Dorsolateral prefrontal cortex (tissue), 120 donors: ENCODE measurements at regions of chr6 and their contacts with region 1.

Region 1: GRCh38 chr6:35731736-35732532 is 4.9 kb upstream of the ARMC12 start:
- DNase-seq: peak; percentile 83 to 92 (median 88)
- H3K4me3 ChIP-seq: peak overlapping the region; percentile 56 to 97 (median 75)
- H3K27ac ChIP-seq: peak overlapping the region; percentile 97 to 100 (median 100)
- H3K27me3 ChIP-seq: no peaks in the 10 kb centered on the region
- CTCF ChIP-seq: peak in 32 of 56 donors; percentile 2 to 53 (median 22)

Region 2: DNA sequence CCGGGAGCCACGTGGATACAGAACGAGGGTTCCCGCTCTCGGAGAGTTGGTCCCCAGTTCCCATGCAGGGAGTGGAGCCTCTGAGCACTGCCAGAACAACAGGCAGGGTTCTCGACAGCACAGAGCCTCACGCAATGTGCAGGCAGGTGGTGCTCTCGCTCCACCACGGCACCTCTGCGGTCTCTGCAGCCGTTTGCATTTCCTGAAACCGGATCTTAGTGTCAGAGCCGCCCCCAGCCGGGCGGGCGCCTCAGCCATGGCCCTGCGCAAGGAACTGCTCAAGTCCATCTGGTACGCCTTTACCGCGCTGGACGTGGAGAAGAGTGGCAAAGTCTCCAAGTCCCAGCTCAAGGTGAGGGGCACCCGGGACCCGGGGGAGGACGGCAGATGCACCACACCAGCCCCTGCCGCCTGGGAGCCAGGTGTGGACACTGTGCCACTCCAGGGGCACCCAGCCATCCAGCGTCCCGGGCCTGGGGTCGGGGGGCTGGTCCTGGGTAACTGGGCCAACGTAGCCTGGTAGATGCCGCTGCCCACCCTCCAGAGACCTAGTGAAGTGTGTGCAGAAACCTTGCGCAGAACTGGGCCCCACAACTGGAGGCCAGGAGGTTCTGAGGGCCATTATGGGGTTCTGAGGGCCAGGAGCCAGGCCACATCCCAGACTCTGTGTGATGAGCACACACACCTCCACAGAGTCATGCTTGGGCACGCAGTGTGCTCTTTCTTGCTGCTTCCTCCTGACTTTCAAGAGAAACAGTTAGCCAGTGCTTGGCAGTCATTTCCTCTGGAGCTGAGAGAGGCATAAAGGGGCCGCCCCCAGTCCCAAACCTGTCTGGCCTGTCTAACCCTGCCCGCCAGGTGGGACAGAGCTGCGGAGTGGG is 434.1 kb before region 1 on chr6 and contains the start of gene DEF6:
- intact Hi-C with region 1: loop called in 1 of 2 experiments (anchors 10 kb)
- DNase-seq: peak in 7 of 10 donors; percentile 22 to 60 (median 51)
- H3K4me3 ChIP-seq: peak within 1 kb of the TSS in 51 of 59 donors; percentile 5 to 59 (median 37)
- H3K27ac ChIP-seq: peak within 1 kb of the TSS in 43 of 59 donors; percentile 4 to 78 (median 47)
- H3K27me3 ChIP-seq: no peaks in the 10 kb centered on the region
- CTCF ChIP-seq: peak in 51 of 56 donors; percentile 27 to 72 (median 49)
- total RNA-seq, gene DEF6: 1.6 to 10.2 (median 4.8) TPM

Region 3: DNA sequence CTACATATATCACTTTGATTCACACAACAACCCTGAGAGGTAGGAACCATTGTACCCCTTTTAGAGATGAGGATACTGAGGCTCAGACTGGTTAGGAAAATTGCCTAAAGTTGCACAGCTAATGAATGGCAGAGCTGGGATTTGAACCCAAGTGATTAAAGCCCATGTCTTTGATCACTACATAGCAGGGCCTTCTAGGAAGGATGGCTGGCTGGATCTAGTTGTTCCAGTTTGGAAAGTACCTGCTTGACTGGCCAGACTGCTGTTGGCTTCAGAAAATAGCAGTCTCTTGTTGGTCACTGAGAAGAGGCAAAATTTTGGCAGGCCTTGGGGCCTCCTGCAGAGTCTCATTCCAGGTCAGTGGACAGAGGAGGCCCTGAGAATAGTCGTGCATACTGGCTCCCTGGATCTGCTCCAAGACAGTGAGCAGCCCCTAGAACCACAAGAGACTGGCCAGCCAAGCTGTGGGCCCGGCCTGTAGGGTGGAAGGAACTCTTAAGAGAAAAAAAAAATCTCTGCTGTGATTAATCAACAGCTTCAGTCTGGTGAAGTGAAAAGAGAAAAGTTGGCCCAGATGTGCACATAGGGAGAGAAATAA is 372.1 kb before region 1 on chr6:
- intact Hi-C with region 1: loop called in 1 of 2 experiments (anchors 10 kb)
- DNase-seq: peak in 7 of 10 donors; percentile 24 to 74 (median 55)
- H3K4me3 ChIP-seq: peak overlapping the region in 1 of 59 donors; percentile 25
- H3K27ac ChIP-seq: peak overlapping the region; percentile 8 to 92 (median 77)
- H3K27me3 ChIP-seq: no peaks in the 10 kb centered on the region
- CTCF ChIP-seq: no peak

Region 4: DNA sequence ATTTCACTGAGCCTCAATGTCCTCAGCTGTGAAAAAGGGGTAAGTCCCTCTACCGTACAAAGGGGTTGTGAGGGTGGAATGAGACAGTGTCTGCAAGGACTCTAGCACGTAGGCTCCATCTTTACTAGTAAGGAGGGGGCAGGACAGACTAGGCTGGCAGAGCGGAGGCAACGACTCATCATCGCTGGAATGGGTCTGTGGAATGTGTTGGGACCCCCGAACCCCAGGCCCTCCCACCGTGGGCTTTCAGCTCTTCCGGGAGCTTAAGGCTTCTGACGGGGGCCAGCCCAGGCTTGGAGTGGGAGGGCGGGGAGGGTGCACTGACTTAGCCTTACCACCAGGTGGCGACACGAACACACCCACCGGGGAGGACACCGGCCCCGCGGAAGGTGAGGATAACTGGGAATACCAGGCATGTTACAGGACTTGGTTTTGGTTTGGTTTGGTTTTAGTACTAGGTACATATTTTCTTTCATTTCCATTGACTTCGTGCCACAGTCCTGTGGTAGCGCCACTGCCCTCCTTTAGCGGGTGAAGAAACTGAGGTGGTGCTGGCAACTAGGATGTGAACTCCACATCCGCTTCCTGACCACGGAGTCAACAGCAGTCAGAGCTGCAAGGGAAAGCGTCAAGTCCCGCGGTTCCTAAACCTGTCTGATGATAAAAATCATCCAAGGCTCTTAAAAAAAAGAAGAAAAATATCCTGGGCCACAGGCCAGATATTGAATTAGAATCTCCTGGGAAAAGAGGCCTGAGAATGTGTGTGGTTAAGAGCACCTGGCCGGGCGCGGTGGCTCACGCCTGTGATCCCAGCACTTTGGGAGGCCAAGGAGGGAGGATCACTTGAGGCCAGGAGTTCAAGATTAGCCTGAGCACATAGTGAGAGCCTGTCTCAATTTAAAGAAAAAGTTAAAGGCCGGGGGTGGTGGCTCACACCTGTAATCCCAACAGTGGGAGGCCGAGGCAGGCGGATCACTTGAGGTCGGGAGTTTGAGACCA is 209.0 kb before region 1 on chr6:
- intact Hi-C with region 1: loop called (anchors 1 to 2 kb)
- DNase-seq: peak; percentile 29 to 72 (median 61)
- H3K4me3 ChIP-seq: peak overlapping the region in 15 of 59 donors; percentile 13 to 45 (median 28)
- H3K27ac ChIP-seq: no peak overlapping the region
- H3K27me3 ChIP-seq: no peaks in the 10 kb centered on the region
- CTCF ChIP-seq: peak; percentile 84 to 100 (median 98)

Region 5: GRCh38 chr6:35601331-35602132 is 130.4 kb before region 1 on chr6:
- intact Hi-C with region 1: loop called in 1 of 2 experiments (anchors 2 kb)
- DNase-seq: peak in 3 of 10 donors; percentile 36 to 57 (median 40)
- H3K4me3 ChIP-seq: peak overlapping the region in 54 of 59 donors; percentile 0 to 56 (median 34)
- H3K27ac ChIP-seq: peak overlapping the region; percentile 71 to 100 (median 98)
- H3K27me3 ChIP-seq: no peaks in the 10 kb centered on the region
- CTCF ChIP-seq: peak in 7 of 56 donors; percentile 6 to 38 (median 14)

Region 6: DNA sequence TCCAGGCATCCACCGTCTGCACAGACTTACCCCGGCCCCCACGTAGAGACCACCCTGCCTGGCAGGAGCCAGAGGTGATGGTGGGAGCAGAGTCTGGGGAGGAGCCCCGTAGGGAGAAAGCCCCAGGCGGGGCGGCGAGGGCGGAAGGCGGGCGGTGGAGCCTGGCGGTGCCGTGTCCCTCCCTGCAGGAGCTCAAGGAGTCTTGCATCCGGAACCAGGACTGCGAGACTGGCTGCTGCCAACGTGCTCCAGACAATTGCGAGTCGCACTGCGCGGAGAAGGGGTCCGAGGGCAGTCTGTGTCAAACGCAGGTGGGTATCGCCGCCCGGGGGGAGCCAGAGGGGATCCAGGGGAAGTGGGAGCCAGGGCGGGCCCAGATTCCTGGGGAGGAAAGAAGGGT is 54.9 kb after region 1 on chr6:
- intact Hi-C with region 1: no loop called
- DNase-seq: peak in 1 of 10 donors; percentile 58
- H3K4me3 ChIP-seq: peak overlapping the region in 8 of 59 donors; percentile 4 to 42 (median 25)
- H3K27ac ChIP-seq: no peak overlapping the region
- H3K27me3 ChIP-seq: peaks cover 0 to 32% (median 11%) of the 10 kb centered on the region in 45 donors
- CTCF ChIP-seq: no peak